Mucosa of descending colon (tissue), 3 donors: ENCODE measurements at regions of chr12 and their contacts with region 1.

Region 1: GRCh38 chr12:93742110-93742934 is 65.1 kb downstream of the CRADD start:
- DNase-seq: peak; percentile 72 to 78 (median 75)
- ATAC-seq: peak; percentile 96
- H3K4me3 ChIP-seq: peak overlapping the region; percentile 30
- H3K4me1 ChIP-seq: peaks cover 9% of the 10 kb centered on the region
- CTCF ChIP-seq: no peak

Region 2: DNA sequence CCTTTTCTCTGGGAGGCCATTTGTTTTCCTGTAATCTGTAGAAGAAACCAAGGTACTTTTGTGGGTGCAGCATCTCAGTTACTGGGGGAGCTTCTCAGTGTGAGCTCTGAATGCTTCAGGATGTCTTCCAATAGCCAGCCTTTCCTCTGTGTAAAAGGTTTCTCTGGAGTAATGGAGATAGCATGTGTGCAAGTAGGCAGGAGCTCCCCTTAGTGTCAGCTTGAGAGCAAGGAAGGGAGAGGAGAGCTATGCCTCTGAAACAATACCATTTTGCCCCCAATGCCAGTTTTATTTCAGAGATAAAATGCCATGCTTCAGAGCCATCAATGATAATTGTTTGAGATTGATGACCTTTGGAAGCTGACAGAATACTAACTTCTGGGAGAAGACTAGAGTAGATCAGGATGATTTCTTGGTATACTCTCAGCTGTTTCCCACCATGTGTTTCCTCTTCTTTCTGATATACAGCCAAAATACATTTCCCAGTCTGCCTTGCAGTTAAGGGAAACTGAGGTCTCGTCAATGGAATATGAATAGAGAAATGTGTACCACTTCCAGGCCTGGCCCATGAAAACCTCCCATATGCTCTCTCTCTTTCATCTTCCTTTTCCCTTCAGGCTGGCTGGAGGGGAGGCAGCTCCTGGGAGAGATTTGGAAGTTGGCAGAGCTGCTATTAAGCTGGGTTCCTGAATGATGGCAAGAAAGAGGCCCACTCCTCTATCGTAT is 60.5 kb after region 1 on chr12:
- intact Hi-C with region 1: loop called in 1 of 2 experiments (anchors 10 kb)
- DNase-seq: no peak
- ATAC-seq: no peak
- H3K4me3 ChIP-seq: no peak overlapping the region
- H3K4me1 ChIP-seq: no peaks in the 10 kb centered on the region
- CTCF ChIP-seq: no peak